Activated naive CD4-positive, alpha-beta T cell treated with anti-CD3 and anti-CD28 coated beads for 36 hours (primary cell): ENCODE measurements at regions of chr15 and their contacts with region 1.

Region 1: DNA sequence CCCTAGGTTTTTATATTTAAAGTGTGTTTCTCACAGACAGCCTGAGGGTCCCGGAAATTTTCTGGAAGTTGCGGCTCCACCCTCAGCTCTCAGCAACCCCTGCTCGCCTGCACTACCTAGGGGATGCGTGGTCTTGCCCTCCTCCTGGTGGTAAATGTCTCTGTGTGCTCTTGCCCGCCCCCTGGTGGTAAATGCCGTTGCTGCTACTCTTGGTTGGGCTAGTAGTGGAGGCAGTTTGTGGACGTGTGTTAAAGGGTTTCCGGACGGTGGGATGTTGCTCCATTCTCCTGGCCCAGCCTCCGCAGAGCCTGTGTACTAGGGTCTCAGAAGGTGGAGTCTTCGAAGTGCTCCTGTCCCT is 27.4 kb downstream of the STOML1 start:
- DNase-seq: peak; percentile 93
- H3K4me3 Mint-ChIP-seq: peak overlapping the region; percentile 69
- H3K27ac Mint-ChIP-seq: peak overlapping the region; percentile 75
- H3K4me1 Mint-ChIP-seq: peaks cover 31% of the 10 kb centered on the region
- H3K27me3 Mint-ChIP-seq: no peaks in the 10 kb centered on the region

Region 2: DNA sequence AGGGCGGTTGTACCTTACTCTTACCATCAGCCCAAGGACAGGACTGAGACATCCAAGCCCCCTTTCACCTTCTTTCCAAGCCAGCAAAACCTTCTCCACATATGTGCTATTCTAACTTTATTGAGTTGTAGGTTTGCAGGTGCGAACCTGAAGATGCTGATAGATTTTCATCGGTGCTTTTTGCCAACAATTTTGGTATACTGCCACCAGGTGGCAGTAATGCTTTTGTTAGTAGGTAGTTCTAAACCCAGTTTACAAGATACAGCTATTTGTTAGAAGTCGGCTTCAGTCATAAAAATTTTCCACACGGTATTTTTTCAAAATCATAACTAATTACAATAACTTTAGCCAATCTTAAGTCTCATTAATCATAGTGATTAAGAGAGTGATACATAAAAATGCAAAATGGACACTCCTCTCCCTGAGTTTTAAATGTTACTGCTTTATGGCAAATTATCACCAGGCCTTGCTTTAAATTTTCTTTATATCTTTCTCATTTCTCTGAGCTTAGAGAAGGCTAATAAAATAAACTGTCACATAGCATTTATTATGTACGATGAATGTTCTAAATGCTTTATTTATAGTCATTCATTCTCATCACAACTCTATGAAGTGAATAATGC is 90.7 kb before region 1 on chr15:
- CTCF ChIA-PET with region 1: interaction called, 8 read pairs
- intact Hi-C with region 1: loop called (anchors 1 kb)
- DNase-seq: peak; percentile 51
- H3K4me3 Mint-ChIP-seq: no peak overlapping the region
- H3K27ac Mint-ChIP-seq: no peak overlapping the region
- H3K4me1 Mint-ChIP-seq: no peaks in the 10 kb centered on the region
- H3K27me3 Mint-ChIP-seq: peaks cover 26% of the 10 kb centered on the region

Region 3: GRCh38 chr15:73897441-73898261 is 67.1 kb before region 1 on chr15:
- CTCF ChIA-PET with region 1: no interaction called
- intact Hi-C with region 1: loop called (anchors 1 kb)
- DNase-seq: peak; percentile 77
- H3K4me3 Mint-ChIP-seq: no peak overlapping the region
- H3K27ac Mint-ChIP-seq: no peak overlapping the region
- H3K4me1 Mint-ChIP-seq: no peaks in the 10 kb centered on the region
- H3K27me3 Mint-ChIP-seq: peaks cover 2% of the 10 kb centered on the region

Region 4: GRCh38 chr15:73927476-73928240 is 37.1 kb before region 1 on chr15:
- CTCF ChIA-PET with region 1: interaction called, 8 read pairs
- intact Hi-C with region 1: loop called (anchors 1 kb)
- DNase-seq: peak; percentile 84
- H3K4me3 Mint-ChIP-seq: peak overlapping the region; percentile 72
- H3K27ac Mint-ChIP-seq: no peak overlapping the region
- H3K4me1 Mint-ChIP-seq: peaks cover 33% of the 10 kb centered on the region
- H3K27me3 Mint-ChIP-seq: no peaks in the 10 kb centered on the region

Region 5: GRCh38 chr15:73950831-73951561 is 13.7 kb before region 1 on chr15:
- CTCF ChIA-PET with region 1: interaction called, 20 read pairs
- intact Hi-C with region 1: loop called (anchors 1 kb)
- DNase-seq: peak; percentile 83
- H3K4me3 Mint-ChIP-seq: no peak overlapping the region
- H3K27ac Mint-ChIP-seq: no peak overlapping the region
- H3K4me1 Mint-ChIP-seq: peaks cover 3% of the 10 kb centered on the region
- H3K27me3 Mint-ChIP-seq: no peaks in the 10 kb centered on the region

Region 6: GRCh38 chr15:73991726-73992593 is 27.2 kb after region 1 on chr15 and contains the start of gene STOML1:
- CTCF ChIA-PET with region 1: interaction called, 18 read pairs
- intact Hi-C with region 1: no loop called
- DNase-seq: peak; percentile 95
- H3K4me3 Mint-ChIP-seq: peak within 1 kb of the TSS; percentile 95
- H3K27ac Mint-ChIP-seq: peak within 1 kb of the TSS; percentile 83
- H3K4me1 Mint-ChIP-seq: peaks cover 49% of the 10 kb centered on the region
- H3K27me3 Mint-ChIP-seq: no peaks in the 10 kb centered on the region
- total RNA-seq, gene STOML1: 8.7 to 9.5 TPM